Dorsolateral prefrontal cortex (tissue), 120 donors: ENCODE measurements at regions of chr15 and their contacts with region 1.

Region 1: DNA sequence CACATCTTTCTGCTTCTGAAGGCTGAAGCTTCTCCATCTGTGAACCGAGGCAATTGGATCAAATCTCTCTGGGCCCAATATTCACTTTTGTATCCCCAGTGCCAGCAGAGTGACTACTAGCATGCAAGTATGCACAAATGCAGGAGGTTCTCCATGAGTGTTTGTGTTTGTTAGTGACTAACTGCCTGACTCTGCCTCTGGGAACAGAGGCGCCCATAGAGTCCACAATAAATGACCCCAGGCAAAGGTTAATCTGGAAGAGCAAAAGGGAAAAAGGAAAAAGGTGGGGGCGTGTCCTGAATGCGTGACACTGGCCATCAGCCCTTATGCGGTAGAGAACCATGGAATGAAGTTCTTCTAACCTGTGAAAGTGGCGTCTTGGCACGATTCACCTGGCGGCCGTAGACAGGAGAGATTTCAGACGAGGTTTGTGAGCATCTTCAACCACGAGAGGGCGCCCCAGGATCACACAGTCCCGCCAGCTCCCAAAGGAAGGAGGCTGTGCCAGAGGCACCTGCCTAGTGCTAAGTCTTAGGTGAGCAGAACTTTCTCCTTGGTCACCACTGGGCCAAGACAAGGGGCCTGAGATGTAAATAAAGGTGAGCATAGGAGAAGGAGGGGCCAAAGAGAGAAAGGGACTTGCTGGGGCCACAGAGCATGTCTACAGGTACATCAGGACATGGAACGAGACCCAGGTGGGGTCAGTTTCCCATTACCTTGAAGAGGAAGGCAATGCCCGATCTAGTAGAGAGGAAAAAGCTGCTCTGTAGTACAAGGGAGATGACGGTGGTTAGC is 44.2 kb downstream of the RBPMS2 start:
- DNase-seq: peak; percentile 74 to 89 (median 84)
- H3K4me3 ChIP-seq: peak overlapping the region in 1 of 59 donors; percentile 34
- H3K27ac ChIP-seq: no peak overlapping the region
- H3K27me3 ChIP-seq: no peaks in the 10 kb centered on the region
- CTCF ChIP-seq: peak; percentile 49 to 97 (median 91)

Region 2: DNA sequence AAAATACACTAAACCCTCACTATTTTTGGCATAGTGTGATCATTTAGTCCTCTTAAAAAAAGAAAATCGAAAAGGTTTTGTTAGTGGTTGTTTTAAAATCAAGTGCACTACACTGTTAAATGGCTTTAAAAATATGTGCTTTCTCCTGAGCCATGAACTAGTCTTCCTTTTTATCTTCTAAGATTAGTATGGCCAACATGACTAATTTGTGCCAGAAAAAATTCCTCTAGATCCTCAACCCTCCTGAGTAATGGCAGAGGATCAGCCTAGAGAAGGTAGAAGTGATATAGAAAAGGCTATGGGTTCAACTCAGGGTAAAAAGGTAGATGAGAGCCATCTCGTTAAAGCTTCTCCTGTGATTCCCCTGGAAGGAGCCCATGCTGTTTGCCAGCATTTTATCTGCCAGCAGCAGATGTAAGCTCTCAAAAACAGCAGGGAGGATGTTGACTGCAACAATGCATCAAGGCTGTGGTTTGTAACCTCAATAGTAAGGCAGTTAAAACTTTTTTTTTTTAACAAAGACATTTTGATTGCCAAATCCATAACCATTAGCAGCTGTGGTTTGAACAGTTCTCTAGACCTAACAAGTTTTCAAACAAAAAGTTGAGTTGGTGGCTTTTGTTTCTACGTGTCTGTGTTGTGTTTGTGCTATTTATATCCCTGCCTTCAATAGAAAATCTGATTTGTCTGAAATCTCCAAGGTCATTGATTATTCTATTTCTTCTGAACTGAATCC is 301.0 kb before region 1 on chr15:
- intact Hi-C with region 1: loop called in 1 of 2 experiments (anchors 5 kb)
- DNase-seq: peak in 1 of 10 donors; percentile 5
- H3K4me3 ChIP-seq: no peak overlapping the region
- H3K27ac ChIP-seq: peak overlapping the region in 3 of 59 donors; percentile 18 to 51 (median 21)
- H3K27me3 ChIP-seq: no peaks in the 10 kb centered on the region
- CTCF ChIP-seq: no peak

Region 3: GRCh38 chr15:64687688-64688087 is 43.5 kb before region 1 on chr15:
- intact Hi-C with region 1: loop called (anchors 1 to 2 kb)
- DNase-seq: no peak
- H3K4me3 ChIP-seq: no peak overlapping the region
- H3K27ac ChIP-seq: peak overlapping the region in 55 of 59 donors; percentile 8 to 82 (median 66)
- H3K27me3 ChIP-seq: no peaks in the 10 kb centered on the region
- CTCF ChIP-seq: no peak

Region 4: DNA sequence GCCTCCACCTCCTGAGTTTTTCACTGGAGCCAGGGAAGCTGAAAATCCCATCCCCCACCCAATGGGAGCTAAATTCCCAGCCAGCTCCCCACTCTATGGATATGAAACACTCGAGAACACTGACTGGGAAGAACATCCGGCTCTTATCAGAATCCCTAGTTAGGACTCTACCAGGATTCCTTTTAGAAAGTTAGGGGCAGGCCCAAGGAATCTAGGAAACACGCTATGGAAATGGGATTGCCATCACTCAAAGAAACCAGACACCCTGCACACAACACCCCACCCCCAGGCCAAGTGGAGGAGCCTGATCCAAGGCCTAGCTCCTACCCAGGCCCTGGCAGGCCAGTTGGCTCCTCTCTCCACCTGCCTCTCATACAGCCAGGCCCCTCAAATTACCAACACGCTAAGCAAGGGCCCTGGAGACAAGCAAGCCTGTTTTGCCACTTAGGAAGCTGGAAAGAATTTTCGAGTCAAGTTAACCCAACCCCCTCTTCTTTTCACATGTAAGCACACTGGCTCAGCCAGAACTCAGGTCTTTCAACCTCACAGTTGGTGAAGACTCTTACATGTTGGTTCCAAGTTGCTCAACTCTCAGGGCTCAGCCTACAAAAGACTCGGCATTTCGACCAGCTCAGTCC is 31.3 kb before region 1 on chr15:
- intact Hi-C with region 1: no loop called
- DNase-seq: peak in 1 of 10 donors; percentile 43
- H3K4me3 ChIP-seq: peak overlapping the region; percentile 3 to 95 (median 86)
- H3K27ac ChIP-seq: peak overlapping the region; percentile 1 to 99 (median 94)
- H3K27me3 ChIP-seq: no peaks in the 10 kb centered on the region
- CTCF ChIP-seq: no peak

Region 5: GRCh38 chr15:64905119-64905831 is 174.1 kb after region 1 on chr15:
- intact Hi-C with region 1: loop called (anchors 2 to 5 kb)
- DNase-seq: peak; percentile 59 to 86 (median 74)
- H3K4me3 ChIP-seq: peak overlapping the region; percentile 7 to 74 (median 56)
- H3K27ac ChIP-seq: peak overlapping the region in 26 of 59 donors; percentile 13 to 75 (median 44)
- H3K27me3 ChIP-seq: no peaks in the 10 kb centered on the region
- CTCF ChIP-seq: peak; percentile 43 to 94 (median 88)

Region 6: DNA sequence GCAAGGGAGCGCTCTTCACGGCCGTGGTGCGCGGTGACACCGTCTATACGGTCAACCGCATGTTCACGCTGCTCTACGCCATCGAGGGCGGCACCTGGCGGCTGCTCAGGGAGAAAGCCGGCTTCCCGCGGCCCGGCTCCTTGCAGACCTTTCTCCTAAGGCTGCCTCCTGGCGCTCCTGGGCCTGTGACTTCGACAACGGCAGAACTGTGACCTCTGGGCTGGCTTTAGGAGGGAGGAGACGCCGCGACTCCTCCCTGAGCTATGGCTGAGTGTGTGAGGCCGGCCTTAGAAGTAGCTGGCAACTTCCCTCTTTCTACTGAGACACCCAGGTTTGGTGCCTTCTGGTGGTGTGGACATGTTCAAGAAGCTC is 346.8 kb after region 1 on chr15:
- intact Hi-C with region 1: loop called (anchors 10 kb)
- DNase-seq: peak in 1 of 10 donors; percentile 49
- H3K4me3 ChIP-seq: peak overlapping the region in 7 of 59 donors; percentile 9 to 30 (median 13)
- H3K27ac ChIP-seq: no peak overlapping the region
- H3K27me3 ChIP-seq: peaks cover 0 to 34% (median 18%) of the 10 kb centered on the region in 45 donors
- CTCF ChIP-seq: peak in 51 of 56 donors; percentile 12 to 63 (median 47)